ENCODE measurements at regions of chr11 and their contacts with region 1.

Region 1: DNA sequence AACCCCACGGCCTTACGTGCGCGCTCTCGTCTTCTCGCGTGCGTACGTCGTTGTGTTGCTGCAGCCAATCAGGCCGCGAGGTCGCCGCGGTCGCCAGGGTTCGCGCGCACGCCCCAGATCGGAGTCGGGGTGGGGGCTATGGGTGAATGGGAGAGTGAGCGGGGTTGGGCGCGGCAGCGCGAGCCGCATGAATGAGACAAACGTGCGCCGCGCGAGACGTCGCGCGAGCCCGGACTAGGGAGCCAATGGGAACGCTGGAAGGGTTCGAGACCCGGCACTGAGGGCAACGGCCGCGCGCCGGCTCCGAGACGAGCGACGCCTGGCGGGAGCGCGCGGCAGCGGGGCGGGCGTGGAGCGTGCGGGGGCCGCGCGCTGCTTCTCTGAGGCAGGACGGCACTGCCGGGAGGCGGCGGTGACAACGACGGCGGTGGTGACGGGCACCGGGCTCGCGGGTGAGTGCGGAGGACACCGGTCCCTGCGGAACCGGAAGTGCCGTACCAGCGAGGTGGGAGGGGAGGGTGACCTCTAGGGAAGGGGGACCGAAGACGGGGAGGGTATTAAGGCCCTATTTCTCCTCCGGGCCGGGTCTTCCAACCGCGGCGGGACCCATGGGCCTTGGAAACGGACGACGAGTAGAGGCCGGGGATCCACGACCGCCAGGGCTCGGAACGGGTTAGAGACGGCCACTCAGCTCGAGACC is at the start of gene ZDHHC5:
- DNase-seq: peak; percentile 97 to 99 (median 98)
- ATAC-seq: peak; percentile 94
- H3K4me3 ChIP-seq: peak within 1 kb of the TSS; percentile 98
- H3K27ac ChIP-seq: peak within 1 kb of the TSS; percentile 99
- H3K4me1 ChIP-seq: peaks cover 8 to 9% of the 10 kb centered on the region in 2 experiments; a peak in 4 of 5 replicates
- H3K27me3 ChIP-seq: no peaks in the 10 kb centered on the region
- CTCF ChIP-seq: peak; percentile 29 to 59 (median 47); a peak in 5 of 6 replicates
- EP300 ChIP-seq: peak; percentile 11; the same call in 1 of the 2 replicates
- POLR2A ChIP-seq: peak; percentile 89
- RAD21 ChIP-seq: no peak; a peak in 1 of 4 replicates
- polyA plus RNA-seq, gene ZDHHC5: 3.8 to 8.8 TPM

Region 2: GRCh38 chr11:57597461-57597915 is 70.4 kb before region 1 on chr11 and contains the start of gene SERPING1:
- CTCF ChIA-PET with region 1: no interaction called
- POLR2A ChIA-PET with region 1: no interaction called
- in situ Hi-C with region 1: no loop called
- intact Hi-C with region 1: no loop called
- DNase-seq: no peak
- ATAC-seq: peak; percentile 27
- H3K4me3 ChIP-seq: no peak within 1 kb of the TSS
- H3K27ac ChIP-seq: no peak within 1 kb of the TSS
- H3K4me1 ChIP-seq: peaks cover 0 to 6% of the 10 kb centered on the region in 2 experiments; a peak in 2 of 5 replicates
- H3K27me3 ChIP-seq: peaks cover 45 to 50% of the 10 kb centered on the region in 2 experiments; a peak in 4 of 5 replicates
- CTCF ChIP-seq: no peak
- EP300 ChIP-seq: no peak
- POLR2A ChIP-seq: no peak
- RAD21 ChIP-seq: no peak
- polyA plus RNA-seq, gene SERPING1: 0.21 to 0.30 TPM

Region 3: DNA sequence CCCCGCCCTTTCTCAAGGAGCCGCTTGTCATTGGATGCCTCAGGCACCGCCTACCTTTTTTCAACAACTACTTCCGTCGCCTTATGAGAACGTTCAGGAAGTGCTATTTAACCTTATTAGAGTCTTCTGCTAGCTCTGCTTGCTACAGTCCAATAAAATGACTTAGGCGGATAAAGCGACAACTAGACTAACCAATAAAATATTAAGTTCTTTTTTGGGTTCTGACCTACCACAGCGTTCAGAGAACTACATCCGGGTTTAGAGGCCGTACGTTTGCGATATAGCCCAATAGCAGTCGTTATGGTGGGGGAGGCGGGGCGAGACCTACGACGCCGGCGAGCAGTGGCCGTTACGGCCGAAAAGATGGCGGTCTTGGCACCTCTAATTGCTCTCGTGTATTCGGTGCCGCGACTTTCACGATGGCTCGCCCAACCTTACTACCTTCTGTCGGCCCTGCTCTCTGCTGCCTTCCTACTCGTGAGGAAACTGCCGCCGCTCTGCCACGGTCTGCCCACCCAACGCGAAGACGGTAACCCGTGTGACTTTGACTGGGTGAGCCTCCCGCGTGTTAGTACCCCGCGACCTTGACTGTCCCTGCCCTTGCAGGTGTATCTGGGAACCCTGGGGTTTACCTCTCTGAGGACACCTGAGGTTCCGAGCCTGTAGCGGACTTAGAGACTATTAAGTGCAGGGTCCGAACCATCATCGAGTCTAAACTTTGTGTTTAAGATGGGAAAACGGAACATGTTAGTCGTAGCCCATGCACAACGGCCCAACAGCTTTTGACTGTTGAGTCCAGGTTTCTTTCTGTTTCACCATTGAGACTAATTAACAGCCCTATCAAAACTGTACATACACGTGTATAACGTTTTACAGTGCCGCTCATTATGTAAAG is 44.6 kb after region 1 on chr11 and contains the start of gene TMX2:
- CTCF ChIA-PET with region 1: no interaction called
- POLR2A ChIA-PET with region 1: interaction called, 3 read pairs
- in situ Hi-C with region 1: no loop called
- intact Hi-C with region 1: loop called (anchors 1 kb)
- DNase-seq: peak; percentile 68 to 97 (median 81)
- ATAC-seq: peak; percentile 95
- H3K4me3 ChIP-seq: peak within 1 kb of the TSS; percentile 95
- H3K27ac ChIP-seq: peak within 1 kb of the TSS; percentile 99
- H3K4me1 ChIP-seq: peaks cover 9% of the 10 kb centered on the region in 2 experiments; a peak in 3 of 5 replicates
- H3K27me3 ChIP-seq: no peaks in the 10 kb centered on the region
- CTCF ChIP-seq: no peak
- EP300 ChIP-seq: no peak
- POLR2A ChIP-seq: peak; percentile 95
- RAD21 ChIP-seq: 0 out of 4 replicates have a peak, but pooled peaks of 1 of the 2 experiments have one; percentile 11
- polyA plus RNA-seq, gene TMX2: 381 to 433 TPM

Region 4: DNA sequence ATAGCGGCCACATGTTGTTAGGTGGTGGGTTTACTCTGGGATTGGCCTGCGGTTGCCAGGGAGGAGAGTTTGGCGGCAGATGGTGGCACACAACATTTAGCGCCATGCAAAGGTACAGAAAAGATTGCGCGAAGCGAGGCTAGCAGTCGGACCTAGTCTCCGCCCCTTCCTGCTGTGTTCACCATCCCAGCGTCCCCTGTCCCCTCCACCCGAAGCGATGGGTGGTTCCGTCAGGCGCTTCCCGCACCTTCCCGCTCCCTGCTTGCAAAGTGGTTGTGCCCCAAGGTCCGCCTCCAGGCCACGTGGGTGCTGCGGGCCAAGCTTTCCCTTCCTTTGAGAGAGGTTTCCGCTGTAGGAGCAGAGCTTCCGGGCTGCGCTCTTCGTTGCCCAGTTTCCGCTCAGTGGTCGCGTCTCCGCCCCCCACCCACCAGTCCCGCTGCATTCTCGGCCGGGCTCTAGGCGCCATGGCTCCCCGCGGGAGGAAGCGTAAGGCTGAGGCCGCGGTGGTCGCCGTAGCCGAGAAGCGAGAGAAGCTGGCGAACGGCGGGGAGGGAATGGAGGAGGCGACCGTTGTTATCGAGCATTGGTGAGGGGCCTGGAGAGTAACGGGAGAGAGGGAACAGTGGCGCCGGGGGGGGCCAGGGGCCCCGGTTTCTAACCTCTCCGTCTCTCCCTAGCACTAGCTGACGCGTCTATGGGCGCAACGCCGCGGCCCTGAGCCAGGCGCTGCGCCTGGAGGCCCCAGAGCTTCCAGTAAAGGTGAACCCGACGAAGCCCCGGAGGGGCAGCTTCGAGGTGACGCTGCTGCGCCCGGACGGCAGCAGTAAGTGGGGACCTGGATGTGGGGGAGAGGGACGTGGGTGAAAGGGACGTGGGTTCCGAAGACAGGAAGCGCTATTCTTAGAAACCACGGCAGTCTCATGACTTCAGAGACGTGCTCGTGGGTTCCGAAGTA is 73.5 kb after region 1 on chr11 and contains the start of gene SELENOH:
- CTCF ChIA-PET with region 1: no interaction called
- POLR2A ChIA-PET with region 1: no interaction called
- in situ Hi-C with region 1: no loop called
- intact Hi-C with region 1: loop called (anchors 1 kb)
- DNase-seq: peak; percentile 88 to 98 (median 92)
- ATAC-seq: peak; percentile 96
- H3K4me3 ChIP-seq: peak within 1 kb of the TSS; percentile 70
- H3K27ac ChIP-seq: peak within 1 kb of the TSS; percentile 86
- H3K4me1 ChIP-seq: peaks cover 10 to 11% of the 10 kb centered on the region in 2 experiments; a peak in 4 of 5 replicates
- H3K27me3 ChIP-seq: no peaks in the 10 kb centered on the region
- CTCF ChIP-seq: no peak
- EP300 ChIP-seq: peak; percentile 69
- POLR2A ChIP-seq: peak; percentile 95
- RAD21 ChIP-seq: peak in 1 of 2 experiments; percentile 46; a peak in 3 of 4 replicates
- polyA plus RNA-seq, gene SELENOH: 16.6 to 39.5 TPM

Region 5: GRCh38 chr11:57800444-57801182 is 132.7 kb after region 1 on chr11:
- CTCF ChIA-PET with region 1: interaction called, 7 read pairs
- POLR2A ChIA-PET with region 1: no interaction called
- in situ Hi-C with region 1: loop called (anchors 10 kb)
- intact Hi-C with region 1: loop called (anchors 2 kb)
- DNase-seq: peak; percentile 70 to 73 (median 71)
- ATAC-seq: peak; percentile 86
- H3K4me3 ChIP-seq: no peak overlapping the region
- H3K27ac ChIP-seq: no peak overlapping the region; the same call in 2 of the 3 replicates
- H3K4me1 ChIP-seq: peaks cover 0 to 19% of the 10 kb centered on the region in 2 experiments; a peak in 3 of 5 replicates
- H3K27me3 ChIP-seq: no peaks in the 10 kb centered on the region
- CTCF ChIP-seq: peak; percentile 63 to 94 (median 82); a peak in 5 of 6 replicates
- EP300 ChIP-seq: peak; percentile 28; the same call in 1 of the 2 replicates
- POLR2A ChIP-seq: no peak
- RAD21 ChIP-seq: peak; percentile 93 to 96

Region 6: DNA sequence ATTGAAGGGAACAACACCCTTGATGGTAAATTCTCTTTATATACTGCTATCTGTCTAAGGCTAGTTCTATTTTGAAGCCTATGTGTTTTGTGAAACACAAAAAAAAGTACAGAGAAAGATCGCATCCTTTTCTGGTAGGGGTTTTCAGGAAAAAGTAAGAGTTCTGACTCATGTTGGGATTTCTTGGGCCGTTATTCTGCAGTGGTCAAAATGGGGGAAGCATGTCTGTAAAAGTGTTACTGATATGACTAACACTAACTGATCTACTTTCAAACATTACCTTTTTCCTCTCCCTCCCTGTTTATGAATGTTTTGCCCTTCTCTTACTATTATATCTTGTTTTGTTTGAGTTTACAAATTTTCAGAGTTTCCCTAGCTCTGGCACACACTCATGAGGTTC is 147.6 kb after region 1 on chr11:
- CTCF ChIA-PET with region 1: no interaction called
- POLR2A ChIA-PET with region 1: no interaction called
- in situ Hi-C with region 1: no loop called
- intact Hi-C with region 1: no loop called
- DNase-seq: no peak
- ATAC-seq: no peak
- H3K4me3 ChIP-seq: no peak overlapping the region
- H3K27ac ChIP-seq: no peak overlapping the region
- H3K4me1 ChIP-seq: no peaks in the 10 kb centered on the region
- H3K27me3 ChIP-seq: no peaks in the 10 kb centered on the region
- CTCF ChIP-seq: no peak
- EP300 ChIP-seq: no peak
- POLR2A ChIP-seq: no peak
- RAD21 ChIP-seq: no peak

Region 7: GRCh38 chr11:58061813-58062212 is 393.9 kb after region 1 on chr11:
- CTCF ChIA-PET with region 1: no interaction called
- POLR2A ChIA-PET with region 1: no interaction called
- in situ Hi-C with region 1: no loop called
- intact Hi-C with region 1: loop called (anchors 10 kb)
- DNase-seq: no peak
- ATAC-seq: no peak
- H3K4me3 ChIP-seq: no peak overlapping the region
- H3K27ac ChIP-seq: no peak overlapping the region
- H3K4me1 ChIP-seq: no peaks in the 10 kb centered on the region
- H3K27me3 ChIP-seq: no peaks in the 10 kb centered on the region
- CTCF ChIP-seq: no peak
- EP300 ChIP-seq: no peak
- POLR2A ChIP-seq: no peak
- RAD21 ChIP-seq: no peak

Region 8: DNA sequence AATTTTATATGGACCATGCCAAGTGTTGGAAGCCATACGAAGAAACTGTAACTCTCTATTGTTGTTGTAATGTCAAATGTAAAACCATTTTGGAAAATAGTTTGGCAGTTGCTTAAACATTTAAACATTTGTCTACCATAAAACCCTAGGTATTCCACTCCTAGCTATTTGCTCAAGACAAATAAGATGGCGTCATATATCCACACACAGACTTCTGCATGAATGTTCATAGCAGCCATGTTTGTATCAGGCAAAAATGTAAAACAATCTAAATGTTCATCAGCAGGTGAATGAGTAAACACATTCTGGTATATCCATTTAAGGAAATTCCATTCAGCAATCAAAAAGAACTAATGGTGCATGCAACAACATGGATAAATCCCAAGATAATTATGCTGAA is 429.6 kb after region 1 on chr11:
- CTCF ChIA-PET with region 1: no interaction called
- POLR2A ChIA-PET with region 1: no interaction called
- in situ Hi-C with region 1: no loop called
- intact Hi-C with region 1: no loop called
- DNase-seq: no peak
- ATAC-seq: no peak
- H3K4me3 ChIP-seq: no peak overlapping the region
- H3K27ac ChIP-seq: no peak overlapping the region
- H3K4me1 ChIP-seq: no peaks in the 10 kb centered on the region
- H3K27me3 ChIP-seq: no peaks in the 10 kb centered on the region
- CTCF ChIP-seq: no peak
- EP300 ChIP-seq: no peak
- POLR2A ChIP-seq: no peak
- RAD21 ChIP-seq: no peak

Region 9: GRCh38 chr11:58178444-58178843 is 510.6 kb after region 1 on chr11:
- CTCF ChIA-PET with region 1: no interaction called
- POLR2A ChIA-PET with region 1: no interaction called
- in situ Hi-C with region 1: no loop called
- intact Hi-C with region 1: no loop called
- DNase-seq: no peak
- ATAC-seq: no peak
- H3K4me3 ChIP-seq: no peak overlapping the region
- H3K27ac ChIP-seq: no peak overlapping the region
- H3K4me1 ChIP-seq: no peaks in the 10 kb centered on the region
- H3K27me3 ChIP-seq: no peaks in the 10 kb centered on the region
- CTCF ChIP-seq: no peak
- EP300 ChIP-seq: no peak
- POLR2A ChIP-seq: no peak
- RAD21 ChIP-seq: no peak

Region 10: GRCh38 chr11:58524232-58525036 is 856.5 kb after region 1 on chr11:
- CTCF ChIA-PET with region 1: no interaction called
- POLR2A ChIA-PET with region 1: no interaction called
- in situ Hi-C with region 1: loop called (anchors 25 kb)
- intact Hi-C with region 1: loop called (anchors 5 kb)
- DNase-seq: peak; percentile 67 to 84 (median 72)
- ATAC-seq: peak; percentile 99
- H3K4me3 ChIP-seq: no peak overlapping the region
- H3K27ac ChIP-seq: no peak overlapping the region
- H3K4me1 ChIP-seq: 0 out of 5 replicates have a peak, but pooled peaks cover 0 to 2% of the 10 kb centered on the region in 2 experiments
- H3K27me3 ChIP-seq: peaks cover 3 to 5% of the 10 kb centered on the region in 2 experiments; a peak in 3 of 5 replicates
- CTCF ChIP-seq: peak; percentile 77 to 85 (median 85)
- EP300 ChIP-seq: no peak
- POLR2A ChIP-seq: no peak
- RAD21 ChIP-seq: peak; percentile 21 to 66; a peak in 3 of 4 replicates

Region 11: DNA sequence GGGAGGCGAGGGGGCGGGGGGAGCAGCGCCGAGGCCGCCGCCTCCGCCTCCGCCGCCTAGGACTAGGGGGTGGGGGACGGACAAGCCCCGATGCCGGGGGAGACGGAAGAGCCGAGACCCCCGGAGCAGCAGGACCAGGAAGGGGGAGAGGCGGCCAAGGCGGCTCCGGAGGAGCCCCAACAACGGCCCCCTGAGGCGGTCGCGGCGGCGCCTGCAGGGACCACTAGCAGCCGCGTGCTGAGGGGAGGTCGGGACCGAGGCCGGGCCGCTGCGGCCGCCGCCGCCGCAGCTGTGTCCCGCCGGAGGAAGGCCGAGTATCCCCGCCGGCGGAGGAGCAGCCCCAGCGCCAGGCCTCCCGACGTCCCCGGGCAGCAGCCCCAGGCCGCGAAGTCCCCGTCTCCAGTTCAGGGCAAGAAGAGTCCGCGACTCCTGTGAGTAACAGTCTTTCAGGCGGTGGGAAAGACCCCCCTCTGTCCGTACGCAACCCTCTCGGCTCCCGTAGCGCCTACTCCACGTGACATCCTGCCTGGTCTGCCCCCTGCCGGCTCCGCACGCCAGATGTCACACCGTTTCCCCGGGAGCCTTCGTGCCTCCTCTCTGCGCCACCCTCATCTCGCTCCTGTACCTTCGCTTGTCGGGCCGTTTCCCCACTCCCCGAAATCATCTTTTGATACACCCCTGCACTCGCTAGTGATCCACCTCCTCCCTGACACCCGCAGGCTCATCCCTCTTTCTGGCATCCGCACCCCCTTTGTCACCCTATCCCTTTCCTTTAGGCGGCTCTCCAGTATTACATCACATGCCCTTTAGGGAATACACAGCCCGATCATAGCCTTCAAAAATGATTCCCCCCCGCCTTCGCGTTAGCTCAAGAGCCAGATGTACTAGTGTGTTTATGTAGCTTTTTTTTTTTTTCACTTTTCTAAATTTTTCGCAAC is 911.6 kb after region 1 on chr11:
- CTCF ChIA-PET with region 1: no interaction called
- POLR2A ChIA-PET with region 1: no interaction called
- in situ Hi-C with region 1: no loop called
- intact Hi-C with region 1: loop called (anchors 1 kb)
- DNase-seq: peak; percentile 74 to 95 (median 78)
- ATAC-seq: peak; percentile 72
- H3K4me3 ChIP-seq: peak overlapping the region; percentile 87
- H3K27ac ChIP-seq: peak overlapping the region; percentile 98
- H3K4me1 ChIP-seq: peaks cover 12 to 18% of the 10 kb centered on the region in 2 experiments
- H3K27me3 ChIP-seq: no peaks in the 10 kb centered on the region
- CTCF ChIP-seq: peak; percentile 68 to 85 (median 74)
- EP300 ChIP-seq: peak; percentile 54; the same call in 1 of the 2 replicates
- POLR2A ChIP-seq: peak; percentile 88
- RAD21 ChIP-seq: no peak

Measured in K562 (cell line).